ENCODE measurements at regions of chr17 and their contacts with region 1.

Region 1: GRCh38 chr17:39980351-39981206 is at the start of gene PSMD3:
- DNase-seq: peak; percentile 99
- H3K4me3 ChIP-seq: peak within 1 kb of the TSS; percentile 82
- H3K4me3 Mint-ChIP-seq: peak within 1 kb of the TSS; percentile 98
- H3K27ac Mint-ChIP-seq: peak within 1 kb of the TSS; percentile 97
- H3K4me1 ChIP-seq: peaks cover 6% of the 10 kb centered on the region; the same call in 1 of the 2 replicates
- H3K4me1 Mint-ChIP-seq: peaks cover 19% of the 10 kb centered on the region
- H3K27me3 ChIP-seq: no peaks in the 10 kb centered on the region
- H3K27me3 Mint-ChIP-seq: no peaks in the 10 kb centered on the region
- CTCF ChIP-seq: peak; percentile 68 to 80
- total RNA-seq, gene PSMD3: 179 and 195 TPM in 2 replicates

Region 2: GRCh38 chr17:39782485-39782884 is 198.1 kb before region 1 on chr17:
- CTCF ChIA-PET with region 1: no interaction called
- POLR2A ChIA-PET with region 1: no interaction called
- intact Hi-C with region 1: no loop called
- DNase-seq: peak; percentile 64 to 76
- H3K4me3 ChIP-seq: no peak overlapping the region
- H3K4me3 Mint-ChIP-seq: peak overlapping the region; percentile 27
- H3K27ac Mint-ChIP-seq: peak overlapping the region; percentile 52
- H3K4me1 ChIP-seq: peaks cover 24% of the 10 kb centered on the region
- H3K4me1 Mint-ChIP-seq: peaks cover 21% of the 10 kb centered on the region
- H3K27me3 ChIP-seq: no peaks in the 10 kb centered on the region
- H3K27me3 Mint-ChIP-seq: no peaks in the 10 kb centered on the region
- CTCF ChIP-seq: no peak

Region 3: GRCh38 chr17:39916918-39917317 is 63.7 kb before region 1 on chr17:
- CTCF ChIA-PET with region 1: no interaction called
- POLR2A ChIA-PET with region 1: no interaction called
- intact Hi-C with region 1: loop called (anchors 1 kb)
- DNase-seq: peak; percentile 58 to 67
- H3K4me3 ChIP-seq: no peak overlapping the region
- H3K4me3 Mint-ChIP-seq: peak overlapping the region; percentile 23
- H3K27ac Mint-ChIP-seq: peak overlapping the region; percentile 90
- H3K4me1 ChIP-seq: peaks cover 27% of the 10 kb centered on the region
- H3K4me1 Mint-ChIP-seq: peaks cover 20% of the 10 kb centered on the region
- H3K27me3 ChIP-seq: no peaks in the 10 kb centered on the region
- H3K27me3 Mint-ChIP-seq: no peaks in the 10 kb centered on the region
- CTCF ChIP-seq: peak; percentile 39 to 51

Region 4: DNA sequence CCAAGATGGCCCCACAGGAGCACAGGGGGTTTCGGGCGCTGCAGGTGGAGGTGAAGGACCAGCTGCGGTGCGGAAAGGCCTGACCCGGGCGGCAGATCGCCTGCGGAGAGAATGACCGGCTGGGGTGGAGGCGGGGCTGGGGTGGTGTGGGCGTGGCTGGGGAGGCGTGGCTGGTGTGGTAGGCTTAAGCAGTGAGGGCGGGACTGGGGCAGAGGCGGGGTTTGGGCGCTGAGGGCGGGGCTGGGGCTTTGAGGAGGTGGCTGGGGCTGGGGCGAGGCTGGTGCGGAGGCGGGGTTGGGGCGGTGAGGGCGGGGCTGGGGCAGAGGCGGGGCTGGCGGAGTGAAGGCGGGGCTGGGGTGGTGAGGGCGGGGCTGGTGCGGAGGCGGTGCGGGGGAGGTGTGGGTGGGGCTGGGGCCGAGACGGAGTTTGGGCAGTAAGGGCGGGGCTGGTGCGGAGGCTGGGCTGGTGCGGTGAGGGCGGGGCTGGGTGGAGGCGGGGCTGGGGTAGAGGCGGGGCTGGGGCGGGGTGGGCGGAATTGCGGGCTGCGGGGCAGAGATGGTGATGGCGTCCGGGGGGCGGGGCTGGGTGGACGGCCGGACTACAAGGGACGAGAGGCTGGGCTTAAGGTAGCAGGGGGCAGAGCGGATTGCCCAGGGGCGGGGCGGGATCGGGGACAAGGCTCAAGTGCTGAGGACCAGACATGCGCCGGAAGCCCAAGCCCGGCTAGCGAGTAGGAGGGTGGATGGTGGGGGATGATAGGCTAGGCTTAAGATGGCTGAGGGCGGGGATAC is 27.7 kb before region 1 on chr17:
- CTCF ChIA-PET with region 1: interaction called, 10 read pairs
- POLR2A ChIA-PET with region 1: interaction called, 14 read pairs
- intact Hi-C with region 1: no loop called
- DNase-seq: peak; percentile 94 to 99
- H3K4me3 ChIP-seq: peak overlapping the region; percentile 28
- H3K4me3 Mint-ChIP-seq: peak overlapping the region; percentile 71
- H3K27ac Mint-ChIP-seq: peak overlapping the region; percentile 75
- H3K4me1 ChIP-seq: peaks cover 10% of the 10 kb centered on the region; the same call in 1 of the 2 replicates
- H3K4me1 Mint-ChIP-seq: peaks cover 8% of the 10 kb centered on the region
- H3K27me3 ChIP-seq: no peaks in the 10 kb centered on the region
- H3K27me3 Mint-ChIP-seq: no peaks in the 10 kb centered on the region
- CTCF ChIP-seq: no peak

Region 5: GRCh38 chr17:39963829-39964228 is 16.8 kb before region 1 on chr17:
- CTCF ChIA-PET with region 1: interaction called, 39 read pairs
- POLR2A ChIA-PET with region 1: interaction called, 3 read pairs
- intact Hi-C with region 1: loop called (anchors 1 kb)
- DNase-seq: no peak
- H3K4me3 ChIP-seq: no peak overlapping the region
- H3K4me3 Mint-ChIP-seq: no peak overlapping the region
- H3K27ac Mint-ChIP-seq: no peak overlapping the region
- H3K4me1 ChIP-seq: peaks cover 25% of the 10 kb centered on the region
- H3K4me1 Mint-ChIP-seq: peaks cover 22% of the 10 kb centered on the region
- H3K27me3 ChIP-seq: no peaks in the 10 kb centered on the region
- H3K27me3 Mint-ChIP-seq: no peaks in the 10 kb centered on the region
- CTCF ChIP-seq: no peak

Measured in Caco-2 (cell line).